ENCODE measurements at regions of chr10 and their contacts with region 1.

Region 1: GRCh38 chr10:91298224-91298871 is 77.9 kb downstream of the PCGF5 start:
- DNase-seq: peak; percentile 83
- H3K4me3 ChIP-seq: peak overlapping the region; percentile 16 to 63 (median 33)
- H3K27ac ChIP-seq: no peak overlapping the region
- H3K4me1 ChIP-seq: peaks cover 2% of the 10 kb centered on the region
- H3K27me3 ChIP-seq: no peaks in the 10 kb centered on the region
- CTCF ChIP-seq: peak; percentile 90 to 97
- POLR2A ChIP-seq: peak; percentile 25

Region 2: DNA sequence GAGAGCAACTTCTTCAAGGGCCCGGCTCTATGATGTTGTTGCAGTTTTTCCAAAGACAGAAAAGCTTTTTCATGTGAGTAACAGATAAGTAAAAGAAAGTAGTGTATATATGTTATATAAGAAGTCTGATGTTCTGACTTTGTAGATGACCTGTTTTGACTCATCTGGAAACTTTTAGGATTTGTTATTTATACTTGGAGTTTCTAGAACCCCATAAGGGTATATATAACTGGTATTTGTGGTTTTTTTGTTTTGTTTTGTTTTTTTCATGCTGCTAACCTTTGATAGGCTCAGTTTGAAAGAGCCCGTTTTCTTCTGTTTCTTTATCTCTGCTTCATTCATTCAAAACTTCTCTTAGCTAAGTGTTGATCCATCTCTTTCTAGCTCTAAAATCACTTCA is 419.3 kb before region 1 on chr10:
- CTCF ChIA-PET with region 1: interaction called, 20 read pairs
- POLR2A ChIA-PET with region 1: no interaction called
- dilution Hi-C with region 1: no loop called
- intact Hi-C with region 1: loop called (anchors 1 kb)
- DNase-seq: no peak
- H3K4me3 ChIP-seq: no peak overlapping the region
- H3K27ac ChIP-seq: no peak overlapping the region
- H3K4me1 ChIP-seq: no peaks in the 10 kb centered on the region
- H3K27me3 ChIP-seq: no peaks in the 10 kb centered on the region
- CTCF ChIP-seq: no peak
- POLR2A ChIP-seq: no peak

Region 3: DNA sequence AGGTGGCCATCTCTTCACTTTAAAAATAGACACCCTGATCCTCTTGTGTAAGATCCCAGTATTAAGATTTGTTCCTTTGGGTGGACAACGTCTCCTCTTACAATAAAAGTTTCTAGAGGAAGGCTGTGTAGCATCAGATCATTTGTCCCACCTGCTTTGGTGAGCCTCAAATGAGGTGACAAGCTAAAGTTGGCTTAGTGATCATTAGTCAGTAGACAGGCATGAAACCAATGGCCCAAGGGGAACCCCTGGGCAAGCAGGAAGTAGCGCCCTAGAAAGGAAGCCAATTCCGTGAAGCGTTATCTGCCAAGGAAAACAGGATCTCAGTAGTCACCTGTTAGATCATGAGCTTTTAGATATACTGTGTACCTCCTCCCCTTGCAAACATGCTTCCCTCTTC is 11.1 kb before region 1 on chr10:
- CTCF ChIA-PET with region 1: interaction called, 35 read pairs
- POLR2A ChIA-PET with region 1: no interaction called
- dilution Hi-C with region 1: no loop called
- intact Hi-C with region 1: no loop called
- DNase-seq: no peak
- H3K4me3 ChIP-seq: no peak overlapping the region
- H3K27ac ChIP-seq: no peak overlapping the region
- H3K4me1 ChIP-seq: no peaks in the 10 kb centered on the region
- H3K27me3 ChIP-seq: peaks cover 0 to 2% of the 10 kb centered on the region in 2 experiments
- CTCF ChIP-seq: no peak
- POLR2A ChIP-seq: no peak

Region 4: DNA sequence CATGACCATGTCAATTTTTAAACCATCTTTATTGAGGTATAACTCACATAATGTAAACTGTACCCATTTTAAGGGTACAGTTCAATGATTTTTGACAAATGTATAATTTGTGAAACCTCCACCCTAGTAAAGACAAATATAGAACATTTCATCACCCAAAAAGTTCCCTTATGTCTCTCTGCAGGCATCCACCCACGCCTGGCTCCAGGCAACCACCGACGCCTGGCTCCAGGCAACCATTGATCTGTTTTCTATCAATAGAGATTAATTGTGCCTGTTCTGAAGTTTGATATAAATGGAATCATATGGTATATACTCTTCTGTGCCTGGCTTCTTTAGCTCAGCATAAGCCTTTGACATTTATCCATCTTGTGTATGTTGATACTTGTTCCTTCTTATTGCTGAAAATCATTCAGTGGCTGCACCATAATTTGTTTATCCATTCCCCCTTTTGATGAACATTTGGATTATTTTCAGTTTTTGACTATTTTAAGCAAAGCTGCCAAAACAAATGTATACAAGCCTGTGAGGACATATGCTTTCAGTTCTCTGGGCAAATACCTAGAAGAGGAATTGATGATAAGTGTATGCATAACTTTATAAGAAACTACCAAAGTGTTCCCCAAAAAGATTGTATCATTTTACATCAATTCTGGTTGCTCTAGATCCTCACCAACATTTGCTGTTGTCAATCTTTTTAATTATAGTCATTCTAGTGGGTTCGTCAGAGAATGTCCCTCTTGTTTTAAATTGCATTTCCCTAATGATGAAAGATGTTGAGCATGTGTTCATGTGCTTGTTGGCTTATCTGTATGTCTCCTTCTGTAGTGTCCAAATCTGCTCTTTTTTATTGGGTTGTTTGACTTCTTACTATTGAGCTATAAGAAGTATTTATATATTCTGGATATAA is 56.1 kb after region 1 on chr10:
- CTCF ChIA-PET with region 1: interaction called, 16 read pairs
- POLR2A ChIA-PET with region 1: no interaction called
- dilution Hi-C with region 1: no loop called
- intact Hi-C with region 1: no loop called
- DNase-seq: no peak
- H3K4me3 ChIP-seq: no peak overlapping the region
- H3K27ac ChIP-seq: no peak overlapping the region
- H3K4me1 ChIP-seq: peaks cover 8% of the 10 kb centered on the region
- H3K27me3 ChIP-seq: peaks cover 8 to 16% of the 10 kb centered on the region in 2 experiments
- CTCF ChIP-seq: no peak
- POLR2A ChIP-seq: no peak

Region 5: DNA sequence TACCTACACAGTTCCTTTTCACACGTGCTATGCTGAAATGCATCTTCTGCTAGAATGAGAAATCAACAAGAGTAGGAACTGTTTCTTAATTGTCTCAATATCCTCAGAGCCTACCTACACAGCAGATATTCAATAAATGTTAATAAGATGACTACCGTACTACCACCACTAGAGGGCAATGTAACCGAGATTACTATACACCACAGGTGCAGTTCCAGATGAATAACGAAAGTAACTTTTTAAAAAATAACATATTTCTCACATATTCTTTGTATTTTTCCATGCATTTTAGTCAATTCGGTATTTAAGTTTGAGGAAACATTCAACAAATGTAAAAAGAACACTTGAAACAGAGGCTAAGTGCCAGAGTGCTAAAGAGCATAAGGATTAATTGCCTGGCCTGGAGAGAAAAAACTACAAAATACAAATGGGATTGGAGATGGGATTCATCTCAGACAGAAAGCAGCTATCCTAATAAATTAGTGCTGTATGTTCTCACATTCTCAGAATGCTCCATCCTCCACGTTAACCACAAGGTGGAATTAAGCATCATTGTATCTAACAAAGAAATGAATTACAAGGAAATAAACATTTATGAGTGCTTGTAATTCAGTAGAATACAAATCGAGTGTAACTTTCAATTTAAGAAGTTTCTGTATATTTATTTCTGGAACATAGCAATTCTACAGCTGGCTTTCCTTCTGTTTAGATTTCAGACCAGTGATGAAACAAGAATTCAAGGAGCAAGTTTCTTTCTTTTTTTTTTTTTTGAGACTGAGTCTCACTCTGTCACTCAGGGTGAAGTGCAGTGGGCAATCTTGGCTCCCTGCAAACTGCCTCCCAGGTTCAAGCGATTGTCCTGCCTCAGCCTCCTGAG is 91.5 kb after region 1 on chr10:
- CTCF ChIA-PET with region 1: interaction called, 29 read pairs
- POLR2A ChIA-PET with region 1: no interaction called
- dilution Hi-C with region 1: no loop called
- intact Hi-C with region 1: loop called (anchors 1 kb)
- DNase-seq: peak; percentile 64
- H3K4me3 ChIP-seq: peak overlapping the region in 1 of 3 experiments; percentile 27
- H3K27ac ChIP-seq: no peak overlapping the region
- H3K4me1 ChIP-seq: peaks cover 5% of the 10 kb centered on the region
- H3K27me3 ChIP-seq: peaks cover 14 to 31% of the 10 kb centered on the region in 2 experiments
- CTCF ChIP-seq: peak; percentile 27 to 28
- POLR2A ChIP-seq: no peak

Region 6: GRCh38 chr10:91632671-91633550 is 334.6 kb after region 1 on chr10 and contains the start of gene PPP1R3C:
- CTCF ChIA-PET with region 1: interaction called, 206 read pairs
- POLR2A ChIA-PET with region 1: interaction called, 3 read pairs
- dilution Hi-C with region 1: no loop called
- intact Hi-C with region 1: loop called (anchors 1 kb)
- DNase-seq: peak; percentile 84
- H3K4me3 ChIP-seq: peak within 1 kb of the TSS; percentile 4 to 54 (median 51)
- H3K27ac ChIP-seq: no peak within 1 kb of the TSS
- H3K4me1 ChIP-seq: peaks cover 13% of the 10 kb centered on the region
- H3K27me3 ChIP-seq: peaks cover 2 to 3% of the 10 kb centered on the region in 2 experiments
- CTCF ChIP-seq: peak; percentile 6 to 37
- POLR2A ChIP-seq: peak; percentile 71
- total RNA-seq, gene PPP1R3C: 0.74 and 1.6 TPM in 2 replicates

Measured in endothelial cell of umbilical vein (primary cell).